ENCODE measurements at regions of chr7 and their contacts with region 1.

Region 1: GRCh38 chr7:103704701-103705100 is 258.7 kb upstream of the SLC26A5 start:
- DNase-seq: no peak
- H3K4me3 ChIP-seq: no peak overlapping the region
- H3K27ac ChIP-seq: no peak overlapping the region
- H3K4me1 ChIP-seq: no peaks in the 10 kb centered on the region
- H3K27me3 ChIP-seq: no peaks in the 10 kb centered on the region
- CTCF ChIP-seq: no peak

Region 2: GRCh38 chr7:103668279-103668941 is 36.3 kb before region 1 on chr7:
- CTCF ChIA-PET with region 1: no interaction called
- dilution Hi-C with region 1: loop called (anchors 5 kb)
- in situ Hi-C with region 1: no loop called
- intact Hi-C with region 1: no loop called
- DNase-seq: no peak
- H3K4me3 ChIP-seq: no peak overlapping the region
- H3K27ac ChIP-seq: no peak overlapping the region
- H3K4me1 ChIP-seq: no peaks in the 10 kb centered on the region
- H3K27me3 ChIP-seq: no peaks in the 10 kb centered on the region
- CTCF ChIP-seq: no peak